ENCODE measurements at regions of chr22 and their contacts with region 1.

Region 1: GRCh38 chr22:43853328-43853931 is 8.9 kb downstream of the SULT4A1 start:
- DNase-seq: peak in 1 of 2 experiments; percentile 35
- H3K4me3 ChIP-seq: no peak overlapping the region
- H3K27ac ChIP-seq: no peak overlapping the region
- H3K4me1 ChIP-seq: no peaks in the 10 kb centered on the region
- H3K27me3 ChIP-seq: peaks cover 56% of the 10 kb centered on the region
- CTCF ChIP-seq: no peak

Region 2: GRCh38 chr22:43867839-43868652 is 14.6 kb after region 1 on chr22:
- CTCF ChIA-PET with region 1: no interaction called
- POLR2A ChIA-PET with region 1: no interaction called
- intact Hi-C with region 1: no loop called
- DNase-seq: peak in 1 of 2 experiments; percentile 56
- H3K4me3 ChIP-seq: no peak overlapping the region
- H3K27ac ChIP-seq: no peak overlapping the region
- H3K4me1 ChIP-seq: no peaks in the 10 kb centered on the region
- H3K27me3 ChIP-seq: peaks cover 83% of the 10 kb centered on the region
- CTCF ChIP-seq: no peak

Region 3: GRCh38 chr22:44714703-44715350 is 861.4 kb after region 1 on chr22:
- CTCF ChIA-PET with region 1: interaction called, 13 read pairs
- POLR2A ChIA-PET with region 1: no interaction called
- intact Hi-C with region 1: no loop called
- DNase-seq: no peak
- H3K4me3 ChIP-seq: no peak overlapping the region
- H3K27ac ChIP-seq: no peak overlapping the region
- H3K4me1 ChIP-seq: no peaks in the 10 kb centered on the region; the same call in 1 of the 2 replicates
- H3K27me3 ChIP-seq: no peaks in the 10 kb centered on the region
- CTCF ChIP-seq: no peak

Measured in PC-9 (cell line).